ENCODE measurements at regions of chr6 and their contacts with region 1.

Region 1: GRCh38 chr6:109455502-109456282 is at the start of gene MICAL1:
- DNase-seq: peak; percentile 78 to 90 (median 81)
- H3K4me3 ChIP-seq: peak within 1 kb of the TSS; percentile 76 to 91
- H3K4me3 Mint-ChIP-seq: peak within 1 kb of the TSS; percentile 87 to 99 (median 98)
- H3K27ac ChIP-seq: peak within 1 kb of the TSS; percentile 94
- H3K27ac Mint-ChIP-seq: peak within 1 kb of the TSS; percentile 95 to 100 (median 99)
- H3K4me1 ChIP-seq: peaks cover 75% of the 10 kb centered on the region
- H3K4me1 Mint-ChIP-seq: peaks cover 39 to 76% (median 59%) of the 10 kb centered on the region in 4 donors
- H3K27me3 ChIP-seq: no peaks in the 10 kb centered on the region
- H3K27me3 Mint-ChIP-seq: no peaks in the 10 kb centered on the region
- total RNA-seq, gene MICAL1: 76.5 to 79.3 TPM

Region 2: DNA sequence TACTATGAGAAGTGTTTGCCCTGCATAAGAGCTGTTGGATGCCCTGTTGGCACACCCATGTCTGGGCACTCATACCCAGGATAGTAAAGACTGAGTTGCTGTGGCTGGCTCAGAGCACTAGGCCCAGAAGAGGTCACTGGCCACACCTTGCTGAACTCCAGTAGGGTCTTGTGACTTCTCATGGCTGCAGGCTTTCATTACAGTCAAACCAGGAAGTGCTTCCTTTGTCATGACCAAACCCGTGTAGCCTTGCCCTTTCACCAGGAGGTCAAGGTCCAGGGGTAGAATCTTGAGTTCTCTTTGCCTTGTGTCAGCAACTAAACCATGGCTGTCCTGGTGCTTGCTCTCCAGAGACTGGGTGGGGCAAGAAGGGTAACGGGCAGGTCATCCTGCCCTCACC is 122.9 kb before region 1 on chr6:
- CTCF ChIA-PET with region 1: no interaction called
- POLR2A ChIA-PET with region 1: no interaction called
- intact Hi-C with region 1: no loop called
- DNase-seq: no peak
- H3K4me3 ChIP-seq: no peak overlapping the region
- H3K4me3 Mint-ChIP-seq: no peak overlapping the region
- H3K27ac ChIP-seq: no peak overlapping the region
- H3K27ac Mint-ChIP-seq: peak overlapping the region in 1 of 7 donors; percentile 26
- H3K4me1 ChIP-seq: no peaks in the 10 kb centered on the region
- H3K4me1 Mint-ChIP-seq: peaks cover 0 to 5% (median 3%) of the 10 kb centered on the region in 4 donors
- H3K27me3 ChIP-seq: no peaks in the 10 kb centered on the region
- H3K27me3 Mint-ChIP-seq: no peaks in the 10 kb centered on the region

Region 3: DNA sequence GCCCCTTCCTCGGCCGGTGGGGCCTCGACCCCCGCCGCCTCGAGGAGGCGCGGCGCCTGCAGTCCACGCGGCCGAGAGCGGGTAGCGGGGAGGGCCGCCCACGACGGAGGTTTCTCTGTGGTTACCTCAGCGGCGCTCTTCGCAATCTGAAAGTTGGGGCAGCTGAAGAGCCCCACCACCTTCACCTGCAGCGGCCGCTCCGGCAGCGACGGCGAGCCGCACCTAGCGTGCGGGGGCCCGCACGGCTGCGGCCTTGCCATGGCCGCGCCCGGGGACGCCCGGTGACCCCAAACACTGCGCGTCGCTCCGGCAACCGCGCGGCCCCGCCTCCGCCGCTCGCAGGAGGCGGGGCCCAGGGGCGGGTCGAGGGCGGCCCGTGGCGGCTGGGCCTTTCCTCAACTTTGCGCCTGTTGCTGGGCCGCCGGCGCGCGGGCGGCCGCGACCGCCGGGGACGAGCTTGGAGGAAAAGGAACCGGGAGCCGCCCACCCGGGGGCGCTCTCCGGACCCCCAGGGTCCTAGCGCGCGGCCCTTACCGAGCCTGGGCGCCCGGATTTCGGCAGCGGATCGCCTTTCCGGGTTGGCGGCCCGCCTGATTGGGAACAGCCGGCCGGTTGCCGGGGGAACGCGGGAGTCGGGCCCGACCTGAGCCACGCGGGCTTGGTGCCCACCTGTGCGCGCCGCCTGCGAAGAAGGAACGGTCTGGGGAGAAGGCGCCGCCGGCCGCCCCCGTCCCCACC is 15.2 kb before region 1 on chr6 and contains the starts of genes PPIL6 and SMPD2:
- CTCF ChIA-PET with region 1: interaction called, 70 read pairs
- POLR2A ChIA-PET with region 1: interaction called, 220 read pairs
- intact Hi-C with region 1: loop called (anchors 1 kb)
- DNase-seq: peak; percentile 77 to 84 (median 80)
- H3K4me3 ChIP-seq: peak within 1 kb of the TSS; percentile 69 to 82
- H3K4me3 Mint-ChIP-seq: peak within 1 kb of the TSS; percentile 91 to 98 (median 94)
- H3K27ac ChIP-seq: peak within 1 kb of the TSS; percentile 89
- H3K27ac Mint-ChIP-seq: peak within 1 kb of the TSS; percentile 96 to 98 (median 97)
- H3K4me1 ChIP-seq: peaks cover 25% of the 10 kb centered on the region
- H3K4me1 Mint-ChIP-seq: peaks cover 15 to 32% (median 21%) of the 10 kb centered on the region in 4 donors
- H3K27me3 ChIP-seq: no peaks in the 10 kb centered on the region
- H3K27me3 Mint-ChIP-seq: no peaks in the 10 kb centered on the region
- total RNA-seq, gene PPIL6: 0.39 to 0.52 TPM
- total RNA-seq, gene SMPD2: 21.7 to 23.6 TPM

Region 4: DNA sequence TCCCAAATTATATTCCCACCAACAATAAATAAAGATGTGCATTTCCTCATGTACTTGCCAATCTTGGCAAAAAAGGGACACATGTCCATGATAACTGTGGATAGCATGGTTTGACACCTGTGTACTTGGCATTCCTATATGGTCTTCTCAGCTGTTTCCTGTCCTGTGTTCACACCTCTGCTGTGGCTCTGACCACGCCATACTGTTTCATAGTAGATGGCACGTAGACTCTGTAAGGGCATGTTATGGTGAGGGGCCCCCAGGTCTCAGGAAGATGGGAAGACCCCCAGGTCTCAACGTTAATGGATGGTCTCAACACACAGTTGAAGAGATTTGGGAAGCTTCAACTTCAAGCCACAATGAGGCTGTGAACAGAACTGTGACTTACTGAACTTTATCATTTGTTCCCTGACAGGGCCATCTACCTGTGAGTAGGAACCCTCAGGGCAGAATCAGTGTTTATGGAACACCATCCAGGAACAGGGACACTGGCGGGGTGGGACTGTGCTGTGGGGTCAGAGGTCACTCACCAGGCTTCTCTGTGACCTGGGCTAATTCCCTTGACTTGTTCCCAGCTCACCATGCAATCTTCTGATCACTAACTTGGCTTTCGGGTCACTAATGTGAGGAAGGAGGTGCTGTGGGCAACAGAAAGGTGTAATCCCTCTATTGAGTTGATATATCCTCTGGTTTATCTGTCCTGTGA is 15.6 kb after region 1 on chr6:
- CTCF ChIA-PET with region 1: interaction called, 4 read pairs
- POLR2A ChIA-PET with region 1: interaction called, 20 read pairs
- intact Hi-C with region 1: no loop called
- DNase-seq: no peak
- H3K4me3 ChIP-seq: no peak overlapping the region
- H3K4me3 Mint-ChIP-seq: peak overlapping the region in 1 of 8 donors; percentile 39
- H3K27ac ChIP-seq: no peak overlapping the region
- H3K27ac Mint-ChIP-seq: peak overlapping the region; percentile 26 to 84 (median 75)
- H3K4me1 ChIP-seq: peaks cover 20% of the 10 kb centered on the region
- H3K4me1 Mint-ChIP-seq: peaks cover 46 to 72% (median 51%) of the 10 kb centered on the region in 4 donors
- H3K27me3 ChIP-seq: no peaks in the 10 kb centered on the region
- H3K27me3 Mint-ChIP-seq: no peaks in the 10 kb centered on the region

Region 5: GRCh38 chr6:109491207-109491938 is 35.7 kb after region 1 on chr6:
- CTCF ChIA-PET with region 1: interaction called, 7 read pairs
- POLR2A ChIA-PET with region 1: interaction called, 132 read pairs
- intact Hi-C with region 1: no loop called
- DNase-seq: peak in 4 of 5 donors; percentile 39 to 60 (median 45)
- H3K4me3 ChIP-seq: peak overlapping the region in 1 of 2 donors; percentile 26
- H3K4me3 Mint-ChIP-seq: peak overlapping the region; percentile 22 to 76 (median 58)
- H3K27ac ChIP-seq: peak overlapping the region; percentile 30
- H3K27ac Mint-ChIP-seq: peak overlapping the region; percentile 66 to 90 (median 86)
- H3K4me1 ChIP-seq: peaks cover 20% of the 10 kb centered on the region
- H3K4me1 Mint-ChIP-seq: peaks cover 17 to 22% (median 20%) of the 10 kb centered on the region in 4 donors
- H3K27me3 ChIP-seq: no peaks in the 10 kb centered on the region
- H3K27me3 Mint-ChIP-seq: no peaks in the 10 kb centered on the region

Measured in CD4-positive, alpha-beta memory T cell (primary cell).